Adrenal gland (tissue), 19 donors: ENCODE measurements at regions of chr1 and their contacts with region 1.

Region 1: DNA sequence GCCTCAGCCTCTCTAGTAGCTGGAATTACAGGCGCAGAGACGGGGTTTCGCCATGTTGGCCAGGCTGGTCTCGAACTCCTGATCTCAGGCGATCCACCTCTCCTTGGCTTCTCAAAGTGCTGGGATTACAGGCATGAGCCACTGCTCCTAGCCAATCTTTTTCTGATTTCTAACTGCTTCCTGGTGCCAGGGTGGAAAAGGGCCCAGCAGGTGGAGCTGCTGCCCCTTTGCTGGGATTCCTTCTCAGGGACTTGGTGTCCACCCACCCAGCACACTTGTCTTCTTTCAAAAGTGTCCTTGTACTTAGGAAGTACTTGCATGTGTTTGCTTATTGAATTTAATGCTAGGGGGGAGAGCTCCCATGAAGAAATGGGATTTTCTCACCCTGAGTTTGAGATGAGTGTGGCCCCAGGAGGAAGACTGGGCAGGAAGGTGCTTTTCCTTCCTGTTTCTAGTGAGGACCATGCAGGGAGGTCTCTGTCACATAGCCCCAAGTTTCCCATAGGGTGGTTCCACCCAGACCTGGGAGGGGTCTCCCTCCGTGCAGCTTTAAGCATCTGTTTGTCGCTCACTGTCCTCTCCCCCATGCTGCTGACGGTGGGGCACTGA is 14.2 kb downstream of the UTP11 start:
- DNase-seq: peak; percentile 75 to 90 (median 85)
- H3K4me3 ChIP-seq: no peak overlapping the region
- H3K27ac ChIP-seq: peak overlapping the region in 1 of 5 donors; percentile 29
- H3K4me1 ChIP-seq: peaks cover 32 to 36% of the 10 kb centered on the region in 2 donors
- H3K27me3 ChIP-seq: no peaks in the 10 kb centered on the region
- CTCF ChIP-seq: peak; percentile 62 to 88 (median 82)
- POLR2A ChIP-seq: no peak

Region 2: GRCh38 chr1:38586993-38587646 is 560.4 kb after region 1 on chr1:
- intact Hi-C with region 1: loop called (anchors 5 to 10 kb)
- DNase-seq: peak; percentile 41 to 68 (median 63)
- H3K4me3 ChIP-seq: no peak overlapping the region
- H3K27ac ChIP-seq: no peak overlapping the region
- H3K4me1 ChIP-seq: no peaks in the 10 kb centered on the region
- H3K27me3 ChIP-seq: no peaks in the 10 kb centered on the region
- CTCF ChIP-seq: peak; percentile 71 to 92 (median 80)
- POLR2A ChIP-seq: no peak

Region 3: DNA sequence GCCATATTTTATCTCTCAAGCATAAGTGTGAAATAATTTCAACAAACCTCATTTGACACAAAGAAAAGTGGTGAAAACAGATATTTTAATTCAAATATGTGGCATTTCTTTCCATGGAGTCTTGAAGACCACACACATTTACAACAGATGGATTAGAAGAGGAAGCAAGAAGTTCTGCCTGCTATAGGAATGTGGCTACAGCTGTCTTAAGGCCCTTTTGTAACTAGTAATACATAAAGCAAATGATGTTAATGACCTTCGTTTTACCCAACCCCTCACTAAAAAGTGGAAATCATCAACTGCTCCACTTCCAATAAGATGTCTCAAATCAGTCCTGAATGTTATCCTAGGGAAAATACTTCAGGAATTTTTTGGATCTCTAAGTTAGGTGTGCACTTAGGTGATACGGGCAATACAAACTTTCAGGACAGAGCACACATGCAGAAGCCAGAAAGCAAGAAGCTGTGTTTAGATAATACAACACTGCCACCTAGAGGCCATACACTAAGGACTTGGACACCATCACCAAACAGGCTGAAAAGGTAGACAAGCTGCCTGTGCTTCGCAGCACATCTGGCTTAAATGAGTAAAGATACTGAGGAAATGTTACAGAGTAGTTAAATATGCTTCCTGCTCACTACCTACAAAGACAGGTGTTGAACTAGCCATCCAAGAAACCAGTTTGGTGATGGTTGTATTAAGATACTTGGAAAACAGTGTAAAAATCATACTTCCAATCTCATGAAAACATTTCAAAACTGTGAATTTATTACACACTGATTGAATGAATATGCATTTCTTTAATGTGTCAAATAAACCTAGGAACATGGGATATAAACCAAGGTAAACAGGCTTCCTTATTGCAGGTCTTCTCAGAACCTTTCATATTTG is 808.5 kb after region 1 on chr1:
- intact Hi-C with region 1: loop called in 1 of 2 experiments (anchors 10 kb)
- DNase-seq: peak; percentile 23 to 73 (median 55)
- H3K4me3 ChIP-seq: no peak overlapping the region
- H3K27ac ChIP-seq: no peak overlapping the region
- H3K4me1 ChIP-seq: no peaks in the 10 kb centered on the region
- H3K27me3 ChIP-seq: no peaks in the 10 kb centered on the region
- CTCF ChIP-seq: peak; percentile 61 to 86 (median 75)
- POLR2A ChIP-seq: no peak